ENCODE measurements at regions of chr15 and their contacts with region 1.

Region 1: GRCh38 chr15:92808978-92809879 is 90.9 kb upstream of the CHD2 start:
- DNase-seq: peak; percentile 99
- ATAC-seq: peak; percentile 85 to 95
- H3K4me3 ChIP-seq: peak overlapping the region; percentile 67
- H3K27ac ChIP-seq: peak overlapping the region; percentile 97
- H3K4me1 ChIP-seq: peaks cover 62% of the 10 kb centered on the region
- H3K27me3 ChIP-seq: no peaks in the 10 kb centered on the region
- CTCF ChIP-seq: peak; percentile 99

Region 2: DNA sequence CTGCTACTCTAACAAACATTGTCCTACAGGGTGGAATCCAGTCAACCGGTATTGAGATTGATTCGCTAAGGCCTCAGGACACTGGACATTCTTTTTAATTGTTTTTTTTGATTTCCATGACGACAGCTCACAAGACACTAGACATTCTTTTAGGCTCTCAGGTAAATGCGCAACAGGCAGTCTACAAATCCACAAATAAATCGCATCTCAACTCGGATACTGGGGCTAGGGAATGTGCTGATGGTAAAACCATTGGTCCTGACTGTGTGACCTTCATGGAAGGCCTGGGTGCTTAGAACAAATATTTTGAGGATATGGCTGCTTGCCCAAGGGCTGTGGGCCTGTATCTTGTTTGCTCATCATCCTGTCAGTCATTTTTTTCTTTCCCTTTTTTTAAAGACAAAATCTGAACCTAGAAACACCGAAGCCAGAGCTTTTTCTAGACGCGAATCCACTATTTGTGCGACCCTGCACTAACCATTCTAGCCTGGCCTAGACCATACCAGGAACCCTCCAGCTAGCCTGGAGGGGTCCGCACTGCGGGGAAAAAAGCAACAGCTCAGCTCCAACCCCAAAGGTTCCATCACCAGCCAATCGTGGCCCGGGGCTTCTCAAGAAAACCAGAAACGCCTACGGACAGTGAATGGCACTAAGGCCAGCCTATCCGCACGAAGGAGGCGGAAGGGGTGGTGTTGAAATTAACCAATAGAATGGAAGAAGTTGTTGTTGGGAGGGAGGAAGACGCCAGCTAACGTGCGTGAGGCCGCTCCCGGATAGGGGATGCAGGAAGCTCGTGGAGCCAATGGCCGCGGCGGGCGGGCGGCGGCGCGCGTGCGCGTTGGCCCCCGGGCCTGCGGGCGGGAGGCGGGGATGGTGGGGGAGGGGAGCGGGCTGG is 72.8 kb after region 1 on chr15:
- intact Hi-C with region 1: no loop called
- DNase-seq: peak; percentile 98
- ATAC-seq: peak; percentile 94 to 97
- H3K4me3 ChIP-seq: peak overlapping the region; percentile 70
- H3K27ac ChIP-seq: peak overlapping the region; percentile 99
- H3K4me1 ChIP-seq: peaks cover 31% of the 10 kb centered on the region
- H3K27me3 ChIP-seq: no peaks in the 10 kb centered on the region
- CTCF ChIP-seq: no peak

Region 3: DNA sequence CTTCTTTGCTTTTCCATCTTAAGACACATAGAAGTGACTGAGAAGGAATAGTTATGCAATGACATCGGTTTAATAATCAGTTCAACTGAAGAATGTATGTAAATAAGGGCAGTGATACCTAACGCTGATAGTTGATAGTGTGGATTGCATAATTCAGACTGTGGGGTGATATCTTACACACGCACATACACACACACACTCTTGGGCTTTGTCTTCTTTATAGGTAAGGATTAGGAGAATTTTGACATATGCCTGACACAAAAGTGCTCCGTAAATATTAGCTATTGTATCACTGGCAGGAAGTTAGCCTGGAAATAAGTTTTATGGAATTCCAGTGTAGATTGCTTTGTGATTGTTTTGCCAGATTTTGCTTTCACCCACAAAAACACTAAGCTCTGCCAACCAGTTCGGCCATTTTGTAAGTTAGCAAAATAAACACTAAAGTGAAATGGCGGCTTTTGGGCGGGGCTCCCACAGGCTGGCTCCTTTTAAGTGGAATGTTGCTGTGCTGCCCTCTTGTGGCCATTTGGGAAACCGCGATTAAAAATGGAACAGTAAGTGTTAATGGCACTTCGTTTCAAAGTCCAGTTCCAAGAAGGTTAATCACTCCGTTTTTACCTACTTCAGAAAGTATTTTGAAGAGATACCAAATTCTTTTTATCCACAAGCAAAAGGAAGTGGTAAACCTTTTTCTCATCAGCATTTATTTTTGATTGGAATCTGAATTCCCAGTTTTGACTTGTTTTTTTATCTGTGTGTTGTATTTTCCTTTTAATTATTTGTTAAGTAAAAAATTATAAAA is 108.6 kb after region 1 on chr15:
- intact Hi-C with region 1: loop called (anchors 10 kb)
- DNase-seq: peak; percentile 95
- ATAC-seq: peak; percentile 75 to 87
- H3K4me3 ChIP-seq: peak overlapping the region; percentile 15
- H3K27ac ChIP-seq: peak overlapping the region; percentile 81
- H3K4me1 ChIP-seq: peaks cover 97% of the 10 kb centered on the region
- H3K27me3 ChIP-seq: no peaks in the 10 kb centered on the region
- CTCF ChIP-seq: peak; percentile 91

Measured in lower lobe of right lung (tissue), 2 donors.